Mammary epithelial cell (primary cell): ENCODE measurements at regions of chr1 and their contacts with region 1.

Region 1: DNA sequence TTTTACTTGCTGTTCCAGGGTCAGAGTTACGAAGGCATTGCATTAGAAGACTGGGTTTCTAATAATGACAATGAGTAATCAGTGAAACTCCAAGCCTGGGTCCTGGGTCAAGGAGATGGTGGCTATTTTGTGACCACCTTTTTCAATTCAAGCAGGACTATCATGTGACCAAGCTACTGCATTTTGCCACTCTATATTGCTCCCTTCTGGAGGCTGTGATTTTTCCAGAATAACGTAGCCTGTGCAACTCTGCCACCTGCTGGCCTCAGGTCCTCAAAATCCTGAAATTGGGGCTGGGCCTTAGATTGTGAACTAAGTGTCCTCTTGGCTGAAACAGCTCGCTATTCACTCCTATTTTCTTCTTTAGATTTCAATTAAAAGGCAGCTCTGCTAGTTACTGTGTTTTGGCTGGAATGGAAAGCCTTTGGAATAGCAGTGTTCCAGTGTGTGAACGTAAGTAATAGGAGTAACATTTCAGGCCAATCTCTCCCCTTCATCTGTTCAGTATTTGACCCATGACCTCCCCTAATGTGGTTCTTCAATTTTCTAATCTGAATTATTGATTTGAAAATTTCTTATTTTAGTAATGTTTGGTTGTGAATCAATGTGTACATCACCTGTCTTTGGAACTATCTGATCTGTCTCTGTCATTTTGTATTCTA is 52.9 kb upstream of the CD46 start:
- DNase-seq: peak; percentile 55
- H3K4me3 ChIP-seq: no peak overlapping the region
- H3K27ac ChIP-seq: no peak overlapping the region
- H3K4me1 ChIP-seq: no peaks in the 10 kb centered on the region
- H3K27me3 ChIP-seq: no peaks in the 10 kb centered on the region
- CTCF ChIP-seq: peak; percentile 64 to 76

Region 2: DNA sequence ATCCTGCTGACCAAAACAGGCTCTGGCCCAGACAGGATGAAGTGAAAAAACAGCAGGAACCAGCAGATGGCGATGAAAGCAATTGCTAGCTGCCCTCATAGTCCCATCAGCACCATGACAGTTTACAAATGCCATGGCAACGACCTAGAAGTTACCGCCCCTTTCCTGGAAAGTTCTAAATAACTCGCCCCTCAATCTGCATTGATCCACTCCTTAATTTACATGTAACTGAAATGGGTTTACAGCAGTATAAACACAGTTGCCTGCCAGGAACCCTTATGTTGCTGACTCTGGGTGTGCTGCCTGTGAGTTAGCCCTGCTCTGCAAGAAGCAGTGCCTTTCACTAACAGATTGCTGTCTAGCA is 119.5 kb before region 1 on chr1:
- CTCF ChIA-PET with region 1: interaction called, 5 read pairs
- dilution Hi-C with region 1: no loop called
- in situ Hi-C with region 1: no loop called
- intact Hi-C with region 1: loop called (anchors 1 kb)
- DNase-seq: peak; percentile 54
- H3K4me3 ChIP-seq: no peak overlapping the region
- H3K27ac ChIP-seq: no peak overlapping the region
- H3K4me1 ChIP-seq: no peaks in the 10 kb centered on the region
- H3K27me3 ChIP-seq: no peaks in the 10 kb centered on the region
- CTCF ChIP-seq: peak; percentile 47 to 70

Region 3: GRCh38 chr1:207654320-207654719 is 44.6 kb before region 1 on chr1:
- CTCF ChIA-PET with region 1: no interaction called
- dilution Hi-C with region 1: no loop called
- in situ Hi-C with region 1: no loop called
- intact Hi-C with region 1: loop called (anchors 2 kb)
- DNase-seq: no peak
- H3K4me3 ChIP-seq: no peak overlapping the region
- H3K27ac ChIP-seq: no peak overlapping the region
- H3K4me1 ChIP-seq: no peaks in the 10 kb centered on the region
- H3K27me3 ChIP-seq: no peaks in the 10 kb centered on the region
- CTCF ChIP-seq: peak; percentile 14 to 40

Region 4: GRCh38 chr1:207838156-207839082 is 139.5 kb after region 1 on chr1:
- CTCF ChIA-PET with region 1: no interaction called
- dilution Hi-C with region 1: no loop called
- in situ Hi-C with region 1: no loop called
- intact Hi-C with region 1: no loop called
- DNase-seq: no peak
- H3K4me3 ChIP-seq: no peak overlapping the region
- H3K27ac ChIP-seq: no peak overlapping the region
- H3K4me1 ChIP-seq: peaks cover 5% of the 10 kb centered on the region
- H3K27me3 ChIP-seq: no peaks in the 10 kb centered on the region
- CTCF ChIP-seq: no peak